Right lobe of liver (tissue), 6 donors: ENCODE measurements at regions of chr19 and their contacts with region 1.

Region 1: GRCh38 chr19:42132851-42133528 is 744 bp upstream of the POU2F2 start:
- DNase-seq: peak; percentile 71 to 78 (median 74)
- ATAC-seq: peak; percentile 83 to 91 (median 88)
- H3K4me3 ChIP-seq: peak overlapping the region in 1 of 3 donors; percentile 33
- H3K27ac ChIP-seq: no peak overlapping the region
- H3K4me1 ChIP-seq: peaks cover 0 to 11% (median 0%) of the 10 kb centered on the region in 4 donors
- H3K27me3 ChIP-seq: no peaks in the 10 kb centered on the region
- CTCF ChIP-seq: peak; percentile 95 to 98 (median 96)
- POLR2A ChIP-seq: no peak

Region 2: GRCh38 chr19:42184401-42184861 is 51.4 kb after region 1 on chr19:
- intact Hi-C with region 1: loop called (anchors 5 kb)
- DNase-seq: peak in 2 of 3 donors; percentile 67 to 78
- ATAC-seq: peak; percentile 84 to 92 (median 90)
- H3K4me3 ChIP-seq: no peak overlapping the region
- H3K27ac ChIP-seq: no peak overlapping the region
- H3K4me1 ChIP-seq: no peaks in the 10 kb centered on the region
- H3K27me3 ChIP-seq: no peaks in the 10 kb centered on the region
- CTCF ChIP-seq: peak; percentile 83 to 95 (median 92)
- POLR2A ChIP-seq: no peak

Region 3: GRCh38 chr19:42295831-42296525 is 163.0 kb after region 1 on chr19:
- intact Hi-C with region 1: no loop called
- DNase-seq: peak; percentile 79 to 84 (median 82)
- ATAC-seq: peak; percentile 77 to 85 (median 80)
- H3K4me3 ChIP-seq: no peak overlapping the region
- H3K27ac ChIP-seq: no peak overlapping the region
- H3K4me1 ChIP-seq: peaks cover 0 to 9% (median 0%) of the 10 kb centered on the region in 4 donors
- H3K27me3 ChIP-seq: no peaks in the 10 kb centered on the region
- CTCF ChIP-seq: peak; percentile 82 to 93 (median 90)
- POLR2A ChIP-seq: no peak

Region 4: GRCh38 chr19:42325273-42325895 is 192.4 kb after region 1 on chr19 and contains the start of gene MEGF8:
- intact Hi-C with region 1: loop called in 1 of 2 experiments (anchors 10 kb)
- DNase-seq: peak; percentile 96 to 98 (median 98)
- ATAC-seq: peak; percentile 96 to 98 (median 98)
- H3K4me3 ChIP-seq: peak within 1 kb of the TSS; percentile 95 to 97 (median 96)
- H3K27ac ChIP-seq: peak within 1 kb of the TSS; percentile 38 to 71 (median 62)
- H3K4me1 ChIP-seq: peaks cover 0 to 11% (median 0%) of the 10 kb centered on the region in 4 donors
- H3K27me3 ChIP-seq: no peaks in the 10 kb centered on the region
- CTCF ChIP-seq: peak; percentile 88 to 94 (median 91)
- POLR2A ChIP-seq: peak; percentile 74
- total RNA-seq, gene MEGF8: 5.5 to 11.0 (median 8.7) TPM